Activated naive CD4-positive, alpha-beta T cell treated with anti-CD3 and anti-CD28 coated beads for 36 hours (primary cell): ENCODE measurements at regions of chr1 and their contacts with region 1.

Region 1: GRCh38 chr1:171715813-171716251 is 26.0 kb downstream of the VAMP4 start:
- DNase-seq: no peak
- H3K4me3 Mint-ChIP-seq: no peak overlapping the region
- H3K27ac Mint-ChIP-seq: no peak overlapping the region
- H3K4me1 Mint-ChIP-seq: peaks cover 4% of the 10 kb centered on the region
- H3K27me3 Mint-ChIP-seq: no peaks in the 10 kb centered on the region

Region 2: DNA sequence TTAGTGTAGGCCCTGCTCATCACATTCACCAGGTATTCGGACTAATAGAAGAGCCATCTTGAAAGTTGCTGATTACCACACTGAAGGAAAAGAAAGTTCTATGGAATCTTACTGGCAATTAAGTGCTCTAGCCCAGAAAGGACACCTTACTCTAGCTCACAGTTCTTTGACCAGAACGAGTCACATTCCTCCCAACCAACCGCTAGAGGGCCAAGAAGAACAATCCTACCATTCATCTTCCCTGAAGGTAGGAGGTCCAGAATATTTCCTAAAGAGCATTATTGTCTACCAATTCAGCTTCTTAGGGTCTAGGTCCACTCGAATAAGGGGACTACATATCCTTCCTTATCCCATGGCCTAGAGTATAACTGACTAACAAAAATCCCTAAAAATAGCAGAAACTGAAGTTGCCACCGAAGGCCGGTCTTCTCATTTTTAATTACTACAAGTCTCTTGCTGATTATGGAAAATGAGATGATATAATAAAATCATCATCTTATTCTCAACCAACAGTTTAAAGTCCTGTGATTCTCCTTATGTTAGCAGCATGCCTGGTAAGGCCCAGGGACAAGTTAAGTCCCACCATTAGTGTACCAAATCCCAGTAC is 470.3 kb before region 1 on chr1:
- CTCF ChIA-PET with region 1: no interaction called
- intact Hi-C with region 1: loop called (anchors 1 kb)
- DNase-seq: peak; percentile 31
- H3K4me3 Mint-ChIP-seq: no peak overlapping the region
- H3K27ac Mint-ChIP-seq: no peak overlapping the region
- H3K4me1 Mint-ChIP-seq: no peaks in the 10 kb centered on the region
- H3K27me3 Mint-ChIP-seq: peaks cover 21% of the 10 kb centered on the region

Region 3: DNA sequence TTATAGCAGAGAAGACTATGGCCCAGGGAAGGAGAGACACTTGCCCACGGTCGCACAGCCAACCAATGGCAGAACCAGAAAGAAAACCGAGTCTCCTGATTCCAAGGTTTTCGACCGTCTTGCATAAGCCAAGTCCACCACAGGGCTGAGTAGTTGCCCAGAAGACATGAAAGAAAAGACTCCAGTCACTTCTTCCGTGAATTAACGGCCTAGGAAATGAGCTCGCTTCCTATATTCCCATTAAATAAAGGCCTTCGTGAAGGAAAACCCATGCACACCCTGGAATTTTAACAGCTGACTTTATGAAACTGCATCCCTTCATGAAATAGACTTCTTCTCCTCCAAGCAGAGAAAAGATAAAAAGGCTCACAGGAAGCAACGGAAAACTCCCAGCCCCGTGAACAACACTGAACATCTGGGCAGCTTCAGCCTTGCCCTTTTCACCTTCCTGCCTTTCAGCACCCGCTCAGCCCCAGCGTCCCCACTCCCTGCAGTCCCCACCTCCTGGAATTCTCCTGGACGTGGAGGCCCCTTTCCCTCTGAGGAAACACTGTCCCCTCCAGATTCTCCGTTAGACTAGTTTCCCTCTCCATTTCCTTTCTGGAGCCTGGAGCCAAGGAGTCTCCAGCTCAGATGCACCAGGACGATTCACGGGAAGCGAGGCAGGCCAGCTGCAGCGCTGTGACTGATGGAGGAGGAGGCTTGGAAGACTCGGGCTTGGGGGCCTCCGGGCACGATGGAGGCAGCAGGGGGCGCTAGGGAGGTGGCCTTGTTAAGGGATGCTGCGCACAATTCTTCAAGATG is 60.7 kb before region 1 on chr1:
- CTCF ChIA-PET with region 1: interaction called, 8 read pairs
- intact Hi-C with region 1: loop called (anchors 2 kb)
- DNase-seq: peak; percentile 92
- H3K4me3 Mint-ChIP-seq: peak overlapping the region; percentile 39
- H3K27ac Mint-ChIP-seq: no peak overlapping the region
- H3K4me1 Mint-ChIP-seq: peaks cover 11% of the 10 kb centered on the region
- H3K27me3 Mint-ChIP-seq: peaks cover 5% of the 10 kb centered on the region